Activated naive CD4-positive, alpha-beta T cell treated with anti-CD3 and anti-CD28 coated beads for 36 hours (primary cell): ENCODE measurements at regions of chr7 and their contacts with region 1.

Region 1: GRCh38 chr7:28155019-28155660 is 25.5 kb downstream of the JAZF1 start:
- DNase-seq: no peak
- H3K4me3 Mint-ChIP-seq: no peak overlapping the region
- H3K27ac Mint-ChIP-seq: peak overlapping the region; percentile 36
- H3K4me1 Mint-ChIP-seq: peaks cover 45% of the 10 kb centered on the region
- H3K27me3 Mint-ChIP-seq: no peaks in the 10 kb centered on the region

Region 2: DNA sequence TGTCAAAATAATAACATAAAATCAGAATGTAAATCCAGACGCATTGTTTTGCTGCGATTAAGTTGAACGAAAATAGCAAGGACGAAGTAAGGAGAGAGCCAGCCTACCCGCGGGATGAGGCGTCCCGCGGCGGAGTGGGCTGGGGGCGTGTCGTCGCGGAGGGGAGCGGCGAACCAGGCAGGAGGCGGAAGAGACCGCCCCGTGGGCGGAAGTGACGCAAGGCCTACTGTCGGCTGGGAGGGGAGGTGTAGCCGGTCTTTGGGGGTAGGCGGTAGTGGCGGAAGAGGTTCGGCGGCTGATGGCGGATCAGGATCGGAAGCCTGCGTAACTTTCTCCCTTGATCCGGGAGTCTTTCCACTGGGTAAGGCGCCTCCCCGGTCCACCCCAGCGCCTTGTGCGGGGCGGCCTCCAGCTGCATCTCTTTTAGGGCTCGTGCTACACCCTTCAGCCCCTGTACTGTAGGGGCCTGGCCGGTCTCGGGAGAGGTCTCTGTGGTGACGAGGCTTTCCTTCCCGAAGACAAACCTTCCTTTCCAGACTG is 415.2 kb before region 1 on chr7 and contains the start of gene TAX1BP1:
- CTCF ChIA-PET with region 1: no interaction called
- intact Hi-C with region 1: loop called (anchors 2 kb)
- DNase-seq: peak; percentile 96
- H3K4me3 Mint-ChIP-seq: peak within 1 kb of the TSS; percentile 96
- H3K27ac Mint-ChIP-seq: peak within 1 kb of the TSS; percentile 98
- H3K4me1 Mint-ChIP-seq: peaks cover 35% of the 10 kb centered on the region
- H3K27me3 Mint-ChIP-seq: no peaks in the 10 kb centered on the region
- total RNA-seq, gene TAX1BP1: 84.1 to 87.9 TPM

Region 3: DNA sequence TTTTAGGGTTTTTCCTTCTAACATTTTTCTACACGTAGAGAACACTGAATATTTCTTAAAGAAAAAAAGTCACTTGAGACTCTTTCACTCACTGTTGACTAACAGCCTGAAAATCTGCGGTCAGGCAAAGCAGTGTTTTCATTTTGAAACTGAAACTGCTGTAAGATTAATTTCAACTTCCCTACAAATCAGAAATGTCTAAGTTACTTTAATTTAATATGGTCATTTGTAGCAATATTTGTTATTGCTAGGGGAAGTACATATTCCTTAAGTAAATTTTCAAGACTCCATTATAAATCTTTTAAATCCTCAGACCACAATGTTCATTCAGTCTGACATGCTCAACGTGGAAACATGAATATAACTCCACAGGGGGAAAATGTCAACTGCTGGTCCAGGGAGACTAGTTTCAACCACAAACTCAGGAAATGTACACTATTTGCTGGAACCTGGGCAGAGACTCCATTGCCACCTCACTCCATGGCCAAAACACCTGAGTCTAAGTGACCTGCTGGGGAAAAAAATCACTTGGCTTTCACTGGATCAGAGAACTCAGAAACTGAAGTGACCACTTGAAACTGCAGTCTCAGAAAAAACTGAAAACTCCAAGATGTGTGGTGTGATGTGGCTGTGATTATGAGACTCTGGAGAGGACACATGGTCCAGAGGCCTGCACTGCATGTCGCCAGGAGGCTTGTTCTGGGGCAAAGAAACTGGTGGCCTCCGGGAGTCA is 253.9 kb before region 1 on chr7:
- CTCF ChIA-PET with region 1: no interaction called
- intact Hi-C with region 1: loop called (anchors 1 kb)
- DNase-seq: peak; percentile 51
- H3K4me3 Mint-ChIP-seq: no peak overlapping the region
- H3K27ac Mint-ChIP-seq: no peak overlapping the region
- H3K4me1 Mint-ChIP-seq: peaks cover 30% of the 10 kb centered on the region
- H3K27me3 Mint-ChIP-seq: no peaks in the 10 kb centered on the region

Region 4: GRCh38 chr7:28179120-28180030 is 24.2 kb after region 1 on chr7:
- CTCF ChIA-PET with region 1: no interaction called
- intact Hi-C with region 1: loop called (anchors 1 kb)
- DNase-seq: peak; percentile 70
- H3K4me3 Mint-ChIP-seq: peak overlapping the region; percentile 60
- H3K27ac Mint-ChIP-seq: no peak overlapping the region
- H3K4me1 Mint-ChIP-seq: peaks cover 22% of the 10 kb centered on the region
- H3K27me3 Mint-ChIP-seq: peaks cover 6% of the 10 kb centered on the region

Region 5: DNA sequence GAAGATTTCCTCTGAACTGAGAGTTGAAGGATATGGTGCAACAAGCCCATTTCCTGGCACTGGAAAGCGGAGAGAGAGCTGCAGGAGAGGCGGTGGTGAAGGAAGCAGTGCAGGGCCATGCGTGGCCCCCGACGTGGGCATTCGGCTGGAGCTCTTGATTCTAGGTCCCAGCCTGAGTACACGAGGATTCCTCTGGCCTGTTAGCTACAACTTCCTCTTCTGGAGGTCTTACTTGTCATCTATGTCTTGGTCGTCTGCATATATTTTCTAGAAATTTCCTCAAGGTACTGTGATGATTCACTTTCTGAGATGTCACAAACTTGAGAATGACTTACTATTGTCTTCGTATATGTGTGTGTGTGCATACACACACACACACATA is 84.7 kb after region 1 on chr7:
- CTCF ChIA-PET with region 1: no interaction called
- intact Hi-C with region 1: loop called (anchors 1 kb)
- DNase-seq: peak; percentile 6
- H3K4me3 Mint-ChIP-seq: no peak overlapping the region
- H3K27ac Mint-ChIP-seq: no peak overlapping the region
- H3K4me1 Mint-ChIP-seq: peaks cover 9% of the 10 kb centered on the region
- H3K27me3 Mint-ChIP-seq: peaks cover 48% of the 10 kb centered on the region

Region 6: GRCh38 chr7:28329661-28330363 is 174.7 kb after region 1 on chr7:
- CTCF ChIA-PET with region 1: interaction called, 3 read pairs
- intact Hi-C with region 1: loop called (anchors 1 kb)
- DNase-seq: peak; percentile 25
- H3K4me3 Mint-ChIP-seq: no peak overlapping the region
- H3K27ac Mint-ChIP-seq: no peak overlapping the region
- H3K4me1 Mint-ChIP-seq: peaks cover 40% of the 10 kb centered on the region
- H3K27me3 Mint-ChIP-seq: peaks cover 3% of the 10 kb centered on the region

Region 7: DNA sequence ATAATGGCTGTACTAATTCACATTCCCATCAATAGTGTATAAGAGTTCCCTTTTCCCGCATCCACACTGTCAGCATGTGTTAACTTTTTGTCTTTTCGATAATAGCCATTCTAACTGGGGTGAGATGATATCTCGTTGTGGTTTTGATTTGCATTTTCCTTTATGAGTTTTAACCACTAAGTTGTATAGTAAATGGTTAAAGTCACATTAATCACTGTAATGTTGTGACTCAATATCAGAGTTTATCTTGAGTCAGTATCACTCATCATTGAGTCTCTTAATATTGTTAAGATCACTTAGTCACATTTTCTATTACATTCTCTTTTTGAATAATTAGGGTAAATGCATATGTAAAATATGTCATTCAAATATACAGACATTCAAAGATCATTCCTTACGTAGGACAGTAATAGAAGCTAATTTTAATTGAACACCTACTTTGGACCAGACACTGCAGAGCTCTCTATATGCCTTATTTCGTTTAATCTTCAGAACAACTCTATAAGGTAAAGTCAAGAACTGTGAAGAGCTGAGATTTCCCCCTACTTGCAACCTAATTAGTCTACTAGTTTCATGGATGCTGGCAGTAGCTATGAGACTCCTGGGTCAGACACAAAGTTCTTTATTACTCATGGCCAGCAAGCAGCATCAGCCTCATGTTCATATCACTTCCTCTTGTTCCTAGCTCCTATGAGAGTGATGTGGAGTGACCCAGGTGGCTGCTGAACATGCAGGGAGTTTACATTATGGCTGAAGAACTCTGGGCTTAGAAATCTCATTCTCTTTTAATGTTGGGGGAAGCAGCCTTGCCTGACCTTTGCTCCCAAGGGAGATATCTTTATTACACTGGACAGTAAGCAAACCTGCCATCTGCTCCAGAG is 287.6 kb after region 1 on chr7:
- CTCF ChIA-PET with region 1: no interaction called
- intact Hi-C with region 1: loop called (anchors 1 kb)
- DNase-seq: peak; percentile 6
- H3K4me3 Mint-ChIP-seq: no peak overlapping the region
- H3K27ac Mint-ChIP-seq: no peak overlapping the region
- H3K4me1 Mint-ChIP-seq: peaks cover 12% of the 10 kb centered on the region
- H3K27me3 Mint-ChIP-seq: peaks cover 41% of the 10 kb centered on the region